ENCODE measurements at regions of chr6 and their contacts with region 1.

Region 1: DNA sequence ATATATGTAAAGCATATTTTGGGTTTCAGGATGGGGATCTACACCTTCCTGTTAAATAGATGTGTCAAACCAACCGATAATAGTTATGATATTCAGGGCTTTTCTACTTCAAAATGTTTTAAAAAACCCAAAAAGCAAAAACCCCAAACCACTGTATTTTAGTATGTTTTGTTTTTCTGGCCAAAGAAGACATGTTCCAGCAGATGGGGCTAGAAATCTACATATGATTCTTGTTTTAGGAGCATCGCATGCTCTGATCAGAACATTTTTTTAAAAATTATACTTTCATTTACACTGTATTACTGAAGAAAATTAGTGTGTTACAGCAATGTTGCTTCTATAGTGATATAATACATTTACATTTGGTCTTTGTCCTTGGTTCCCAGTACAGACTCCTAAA is 11.0 kb downstream of the RMND1 start:
- DNase-seq: no peak
- ATAC-seq: peak; percentile 3; the same call in 1 of the 3 replicates
- H3K4me3 ChIP-seq: peak overlapping the region in 2 of 3 experiments; percentile 0; a peak in 1 of 6 replicates
- H3K27ac ChIP-seq: peak overlapping the region; percentile 49
- H3K4me1 ChIP-seq: peaks cover 96% of the 10 kb centered on the region
- H3K27me3 ChIP-seq: no peaks in the 10 kb centered on the region
- CTCF ChIP-seq: peak; percentile 52
- EP300 ChIP-seq: no peak
- POLR2A ChIP-seq: no peak
- RAD21 ChIP-seq: 0 out of 2 replicates have a peak, but pooled peaks have one; percentile 33

Region 2: DNA sequence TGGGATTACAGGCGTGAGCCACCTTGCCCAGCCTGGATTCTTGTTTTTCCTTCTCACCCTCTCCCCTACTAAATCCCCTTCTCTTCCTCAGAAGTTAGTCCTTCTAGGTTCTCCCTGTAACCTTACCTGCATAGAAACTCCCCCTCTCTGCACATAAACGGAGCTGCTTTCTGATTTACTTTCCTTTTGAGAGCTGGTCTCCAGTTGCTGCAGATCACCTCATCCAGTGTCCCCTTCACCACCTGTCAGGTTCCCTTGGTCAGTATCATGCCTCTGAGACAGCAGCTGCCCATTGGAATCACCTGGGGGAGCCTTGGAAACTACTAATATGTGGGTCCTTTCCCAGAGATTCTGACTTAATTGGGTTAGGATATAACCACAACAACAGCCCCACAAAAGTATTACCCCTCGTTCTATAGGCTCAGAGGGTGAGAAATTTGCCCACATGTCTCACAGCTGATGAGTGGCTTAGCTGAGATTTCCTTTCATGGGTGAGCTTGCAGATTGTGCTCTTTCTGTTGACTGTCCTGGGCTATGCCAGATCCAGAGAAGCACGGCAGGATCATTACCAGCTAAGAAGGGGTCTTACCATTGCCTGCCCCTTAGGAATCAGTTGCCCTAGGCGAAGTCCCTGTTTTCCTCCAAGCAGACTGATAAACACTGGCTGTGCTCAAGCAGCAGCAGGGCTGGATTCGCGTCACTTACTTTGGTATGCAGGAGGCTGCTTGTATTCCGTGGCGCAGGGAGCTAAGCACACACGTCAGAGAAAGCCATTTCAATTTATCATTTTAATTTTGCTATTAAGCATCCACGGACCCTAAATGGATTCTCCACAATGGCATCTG is 149.8 kb before region 1 on chr6:
- CTCF ChIA-PET with region 1: no interaction called
- POLR2A ChIA-PET with region 1: no interaction called
- in situ Hi-C with region 1: no loop called
- intact Hi-C with region 1: no loop called
- DNase-seq: no peak
- ATAC-seq: no peak
- H3K4me3 ChIP-seq: no peak overlapping the region
- H3K27ac ChIP-seq: no peak overlapping the region
- H3K4me1 ChIP-seq: no peaks in the 10 kb centered on the region
- H3K27me3 ChIP-seq: no peaks in the 10 kb centered on the region; a peak in 1 of 5 replicates
- CTCF ChIP-seq: no peak
- EP300 ChIP-seq: no peak
- POLR2A ChIP-seq: no peak
- RAD21 ChIP-seq: no peak

Region 3: GRCh38 chr6:151451950-151452749 is 11.2 kb after region 1 on chr6 and contains the start of gene RMND1:
- CTCF ChIA-PET with region 1: no interaction called
- POLR2A ChIA-PET with region 1: interaction called, 32 read pairs
- in situ Hi-C with region 1: no loop called
- intact Hi-C with region 1: loop called (anchors 2 kb)
- DNase-seq: peak; percentile 100
- ATAC-seq: peak; percentile 96
- H3K4me3 ChIP-seq: peak within 1 kb of the TSS; percentile 81 to 90 (median 88)
- H3K27ac ChIP-seq: peak within 1 kb of the TSS; percentile 94
- H3K4me1 ChIP-seq: peaks cover 60% of the 10 kb centered on the region
- H3K27me3 ChIP-seq: peaks cover 0 to 2% of the 10 kb centered on the region in 2 experiments; a peak in 1 of 5 replicates
- CTCF ChIP-seq: peak; percentile 22
- EP300 ChIP-seq: peak; percentile 58 to 83; a peak in 3 of 4 replicates
- POLR2A ChIP-seq: peak; percentile 96 to 97
- RAD21 ChIP-seq: peak; percentile 21; the same call in 1 of the 2 replicates
- total RNA-seq, gene RMND1: 72.5 and 75.6 TPM in 2 replicates

Region 4: GRCh38 chr6:151475653-151476523 is 35.0 kb after region 1 on chr6:
- CTCF ChIA-PET with region 1: interaction called, 23 read pairs
- POLR2A ChIA-PET with region 1: no interaction called
- in situ Hi-C with region 1: loop called (anchors 5 kb)
- intact Hi-C with region 1: loop called (anchors 1 kb)
- DNase-seq: peak; percentile 57
- ATAC-seq: peak; percentile 72
- H3K4me3 ChIP-seq: peak overlapping the region in 2 of 3 experiments; percentile 18 to 38; a peak in 2 of 6 replicates
- H3K27ac ChIP-seq: no peak overlapping the region
- H3K4me1 ChIP-seq: peaks cover 11% of the 10 kb centered on the region
- H3K27me3 ChIP-seq: no peaks in the 10 kb centered on the region
- CTCF ChIP-seq: peak; percentile 75
- EP300 ChIP-seq: no peak
- POLR2A ChIP-seq: no peak
- RAD21 ChIP-seq: peak; percentile 54; the same call in 1 of the 2 replicates

Region 5: GRCh38 chr6:151494235-151494935 is 53.5 kb after region 1 on chr6:
- CTCF ChIA-PET with region 1: no interaction called
- POLR2A ChIA-PET with region 1: interaction called, 3 read pairs
- in situ Hi-C with region 1: no loop called
- intact Hi-C with region 1: loop called (anchors 5 kb)
- DNase-seq: peak; percentile 57
- ATAC-seq: peak; percentile 27
- H3K4me3 ChIP-seq: peak overlapping the region; percentile 95 to 99 (median 97)
- H3K27ac ChIP-seq: peak overlapping the region; percentile 86
- H3K4me1 ChIP-seq: peaks cover 63% of the 10 kb centered on the region
- H3K27me3 ChIP-seq: no peaks in the 10 kb centered on the region; a peak in 1 of 5 replicates
- CTCF ChIP-seq: no peak
- EP300 ChIP-seq: 0 out of 4 replicates have a peak, but pooled peaks of 1 of the 2 experiments have one; percentile 4
- POLR2A ChIP-seq: peak in 1 of 2 experiments; percentile 59; a peak in 1 of 4 replicates
- RAD21 ChIP-seq: no peak

Region 6: GRCh38 chr6:151534576-151534975 is 93.6 kb after region 1 on chr6:
- CTCF ChIA-PET with region 1: no interaction called
- POLR2A ChIA-PET with region 1: no interaction called
- in situ Hi-C with region 1: no loop called
- intact Hi-C with region 1: no loop called
- DNase-seq: no peak
- ATAC-seq: no peak
- H3K4me3 ChIP-seq: no peak overlapping the region
- H3K27ac ChIP-seq: no peak overlapping the region
- H3K4me1 ChIP-seq: peaks cover 11% of the 10 kb centered on the region; the same call in 1 of the 2 replicates
- H3K27me3 ChIP-seq: no peaks in the 10 kb centered on the region
- CTCF ChIP-seq: no peak
- EP300 ChIP-seq: no peak
- POLR2A ChIP-seq: no peak
- RAD21 ChIP-seq: no peak

Region 7: GRCh38 chr6:151553416-151554165 is 112.7 kb after region 1 on chr6:
- CTCF ChIA-PET with region 1: no interaction called
- POLR2A ChIA-PET with region 1: no interaction called
- in situ Hi-C with region 1: no loop called
- intact Hi-C with region 1: no loop called
- DNase-seq: no peak
- ATAC-seq: no peak
- H3K4me3 ChIP-seq: no peak overlapping the region
- H3K27ac ChIP-seq: no peak overlapping the region
- H3K4me1 ChIP-seq: no peaks in the 10 kb centered on the region
- H3K27me3 ChIP-seq: no peaks in the 10 kb centered on the region
- CTCF ChIP-seq: no peak
- EP300 ChIP-seq: no peak
- POLR2A ChIP-seq: no peak
- RAD21 ChIP-seq: no peak

Region 8: GRCh38 chr6:151661928-151662327 is 221.0 kb after region 1 on chr6:
- CTCF ChIA-PET with region 1: no interaction called
- POLR2A ChIA-PET with region 1: no interaction called
- in situ Hi-C with region 1: no loop called
- intact Hi-C with region 1: loop called (anchors 5 kb)
- DNase-seq: no peak
- ATAC-seq: no peak
- H3K4me3 ChIP-seq: no peak overlapping the region
- H3K27ac ChIP-seq: no peak overlapping the region
- H3K4me1 ChIP-seq: peaks cover 33% of the 10 kb centered on the region
- H3K27me3 ChIP-seq: no peaks in the 10 kb centered on the region
- CTCF ChIP-seq: no peak
- EP300 ChIP-seq: no peak
- POLR2A ChIP-seq: no peak
- RAD21 ChIP-seq: no peak

Region 9: GRCh38 chr6:152124429-152125074 is 683.6 kb after region 1 on chr6:
- CTCF ChIA-PET with region 1: no interaction called
- POLR2A ChIA-PET with region 1: no interaction called
- in situ Hi-C with region 1: no loop called
- intact Hi-C with region 1: loop called (anchors 10 kb)
- DNase-seq: peak; percentile 54
- ATAC-seq: peak; percentile 84
- H3K4me3 ChIP-seq: no peak overlapping the region
- H3K27ac ChIP-seq: no peak overlapping the region
- H3K4me1 ChIP-seq: no peaks in the 10 kb centered on the region
- H3K27me3 ChIP-seq: no peaks in the 10 kb centered on the region
- CTCF ChIP-seq: peak; percentile 70
- EP300 ChIP-seq: no peak
- POLR2A ChIP-seq: no peak
- RAD21 ChIP-seq: peak; percentile 62